ENCODE measurements at regions of chr5 and their contacts with region 1.

Region 1: DNA sequence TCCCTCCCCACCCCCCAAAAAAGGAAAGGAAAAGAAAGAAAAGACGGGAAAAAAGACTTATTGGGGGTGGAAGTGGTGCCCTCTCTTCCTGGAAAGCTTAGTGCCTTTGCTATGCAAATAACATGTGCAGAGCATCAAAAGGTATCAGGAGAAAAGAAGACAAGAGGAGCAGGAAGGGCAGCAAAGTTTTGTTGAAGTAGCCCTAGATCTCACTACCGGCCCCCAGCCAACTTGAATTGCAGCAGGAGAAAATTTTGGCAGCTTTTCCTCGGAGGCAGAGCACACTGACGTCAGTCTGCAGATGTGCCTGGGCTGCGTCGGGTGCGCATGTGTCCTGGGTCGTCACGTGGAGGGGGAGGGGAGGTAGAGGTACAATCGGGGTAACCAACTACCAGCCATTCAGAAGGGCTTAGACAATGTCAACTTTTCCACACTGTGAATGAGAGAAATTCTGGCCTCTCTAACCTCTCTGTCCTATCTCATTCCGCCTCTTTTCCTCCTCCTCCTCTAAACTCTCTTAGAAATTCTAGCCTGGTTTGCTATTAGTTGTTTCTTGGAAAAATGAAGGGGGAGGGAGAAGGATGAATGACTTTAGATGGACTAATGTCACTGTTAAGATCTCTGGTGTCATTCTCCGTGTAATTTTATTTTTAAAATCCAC is at the start of gene ADAMTS6:
- DNase-seq: peak; percentile 89
- ATAC-seq: peak; percentile 91
- H3K4me3 Mint-ChIP-seq: no peak within 1 kb of the TSS
- H3K27ac Mint-ChIP-seq: peak within 1 kb of the TSS; percentile 90
- H3K4me1 Mint-ChIP-seq: peaks cover 10% of the 10 kb centered on the region
- H3K27me3 Mint-ChIP-seq: no peaks in the 10 kb centered on the region
- total RNA-seq, gene ADAMTS6: 2.8 to 4.0 TPM

Region 2: DNA sequence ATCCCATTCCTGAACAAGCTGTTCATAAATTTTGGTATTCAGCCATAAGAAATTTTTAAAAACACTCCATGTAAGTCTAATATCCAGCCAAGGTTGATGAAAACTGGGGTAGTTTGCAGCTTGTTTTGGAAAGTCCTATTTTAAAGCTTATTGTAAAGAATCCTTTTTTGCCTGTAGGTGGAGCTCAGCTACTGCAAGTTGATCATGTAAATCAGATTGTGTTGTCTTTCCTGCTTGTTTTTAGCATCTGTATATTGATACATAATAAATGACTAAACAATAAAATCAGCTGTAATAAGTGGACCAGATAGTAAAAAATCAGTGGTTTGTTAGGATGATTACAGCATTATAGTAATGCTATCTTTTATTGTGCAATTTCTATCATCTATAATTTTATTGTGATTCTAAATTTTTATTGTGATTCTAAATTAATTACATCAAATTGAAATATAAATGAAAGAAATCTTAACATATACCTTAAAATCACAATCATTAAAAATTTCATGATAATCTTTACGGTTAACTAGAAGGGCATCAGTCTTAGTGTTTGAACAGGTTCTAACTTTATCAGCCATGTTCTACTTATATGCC is 670.6 kb before region 1 on chr5:
- CTCF ChIA-PET with region 1: interaction called, 37 read pairs
- DNase-seq: no peak
- ATAC-seq: no peak
- H3K4me3 Mint-ChIP-seq: no peak overlapping the region
- H3K27ac Mint-ChIP-seq: no peak overlapping the region
- H3K4me1 Mint-ChIP-seq: peaks cover 23% of the 10 kb centered on the region
- H3K27me3 Mint-ChIP-seq: no peaks in the 10 kb centered on the region

Region 3: DNA sequence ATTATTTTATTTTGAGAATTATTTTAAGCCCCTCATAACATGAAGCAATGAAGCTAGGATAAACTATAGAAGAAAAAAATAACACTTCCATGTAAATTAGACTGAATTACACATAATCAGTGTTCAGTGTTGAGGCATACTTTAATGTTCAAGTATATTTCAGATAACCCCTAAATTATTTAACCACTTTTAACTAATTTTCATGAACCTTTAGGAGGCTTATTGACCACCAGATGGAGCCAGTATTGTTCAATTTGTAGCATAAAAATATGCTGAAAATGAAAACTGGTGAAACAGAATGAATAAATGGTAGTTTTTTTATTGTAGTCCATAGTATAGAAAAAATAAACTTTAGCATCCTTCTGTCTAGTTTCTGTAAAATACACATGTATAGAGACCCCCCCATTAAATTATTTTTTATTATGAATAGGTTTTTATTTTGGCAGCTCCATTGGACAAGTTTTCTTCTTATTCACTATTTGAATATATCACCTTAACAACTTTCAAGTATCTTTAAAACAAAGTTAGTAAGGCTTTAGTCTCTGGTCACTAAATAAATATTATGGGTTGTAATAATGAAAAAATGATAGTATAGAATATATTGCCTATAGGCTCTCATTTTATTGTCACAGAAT is 522.9 kb before region 1 on chr5:
- CTCF ChIA-PET with region 1: interaction called, 12 read pairs
- DNase-seq: no peak
- ATAC-seq: no peak
- H3K4me3 Mint-ChIP-seq: no peak overlapping the region
- H3K27ac Mint-ChIP-seq: no peak overlapping the region
- H3K4me1 Mint-ChIP-seq: no peaks in the 10 kb centered on the region
- H3K27me3 Mint-ChIP-seq: no peaks in the 10 kb centered on the region

Region 4: DNA sequence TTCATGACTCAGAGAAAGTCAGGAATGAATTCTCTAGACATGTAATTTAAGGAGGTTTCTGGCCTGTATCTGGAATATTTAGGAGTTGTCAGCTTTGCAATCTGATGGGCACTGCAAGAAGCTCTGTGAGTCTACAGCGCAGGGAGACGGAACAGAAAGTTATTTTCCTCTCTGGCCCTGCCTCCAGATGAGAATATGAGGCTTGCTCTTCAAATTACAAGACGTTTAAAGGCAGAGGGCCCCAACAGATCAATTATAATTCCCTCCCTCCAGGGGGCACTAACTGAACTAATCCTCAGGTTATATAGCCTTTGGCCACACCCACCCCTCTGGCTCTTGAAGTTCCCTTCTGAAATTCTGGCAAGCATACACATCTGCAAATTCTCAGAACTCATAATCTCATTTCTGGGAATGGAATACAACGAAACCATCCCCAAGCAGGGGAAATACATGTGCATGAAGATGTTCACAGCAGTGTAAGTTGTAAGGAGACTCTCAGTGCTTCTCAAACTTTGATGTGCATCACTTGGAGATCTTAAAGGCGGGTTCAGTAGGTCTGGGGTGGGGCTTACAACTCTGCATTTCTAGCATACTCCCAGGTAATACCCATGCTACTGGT is 405.4 kb before region 1 on chr5:
- CTCF ChIA-PET with region 1: interaction called, 11 read pairs
- DNase-seq: peak; percentile 83
- ATAC-seq: peak; percentile 97
- H3K4me3 Mint-ChIP-seq: no peak overlapping the region
- H3K27ac Mint-ChIP-seq: peak overlapping the region; percentile 29
- H3K4me1 Mint-ChIP-seq: peaks cover 11% of the 10 kb centered on the region
- H3K27me3 Mint-ChIP-seq: peaks cover 11% of the 10 kb centered on the region

Region 5: DNA sequence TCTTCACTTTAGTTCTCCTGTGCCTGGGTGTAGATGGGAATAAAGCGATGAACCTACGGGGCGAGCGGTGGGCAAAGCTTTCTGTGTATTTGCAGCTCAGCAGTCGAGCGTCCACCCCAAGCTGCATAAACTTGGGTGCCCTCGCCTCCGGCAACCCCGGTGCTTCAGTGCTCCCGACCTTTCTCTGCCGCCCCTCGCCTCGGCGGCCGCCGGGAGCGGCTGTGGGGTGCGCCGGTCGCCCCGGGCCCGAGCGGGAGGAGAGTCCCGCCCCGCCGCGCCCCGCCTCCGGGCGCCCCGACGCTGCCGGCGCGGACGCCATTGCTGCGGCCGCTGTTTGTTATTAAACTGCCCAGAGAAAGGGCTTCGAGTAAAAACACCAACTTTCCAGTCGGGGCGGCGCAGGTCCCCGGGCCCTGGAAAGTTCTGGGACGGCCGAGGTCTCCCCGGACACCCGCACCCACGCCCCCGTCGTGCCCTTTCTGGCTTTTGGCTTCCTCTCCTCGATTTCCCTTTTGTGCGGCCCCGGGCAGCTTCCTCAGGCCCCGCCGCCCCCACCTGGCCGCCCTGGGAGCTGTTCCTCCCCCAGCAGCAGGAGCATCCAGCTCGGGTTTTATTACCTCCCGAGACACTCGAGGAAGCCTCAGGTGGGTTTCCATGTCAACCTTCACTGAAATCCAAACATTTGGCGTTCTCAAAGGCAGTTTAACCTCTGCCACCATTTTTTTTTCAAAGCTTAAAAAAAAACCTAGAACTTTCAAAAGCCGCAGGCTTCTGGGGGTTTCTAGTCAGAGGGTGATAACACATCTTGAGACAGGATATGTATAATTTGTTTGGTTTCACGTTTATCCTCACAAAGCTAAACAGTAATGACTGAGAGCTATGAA is 378.7 kb before region 1 on chr5:
- CTCF ChIA-PET with region 1: interaction called, 34 read pairs
- DNase-seq: peak; percentile 59
- ATAC-seq: peak; percentile 83
- H3K4me3 Mint-ChIP-seq: peak overlapping the region; percentile 66
- H3K27ac Mint-ChIP-seq: peak overlapping the region; percentile 33
- H3K4me1 Mint-ChIP-seq: peaks cover 34% of the 10 kb centered on the region
- H3K27me3 Mint-ChIP-seq: peaks cover 19% of the 10 kb centered on the region

Region 6: DNA sequence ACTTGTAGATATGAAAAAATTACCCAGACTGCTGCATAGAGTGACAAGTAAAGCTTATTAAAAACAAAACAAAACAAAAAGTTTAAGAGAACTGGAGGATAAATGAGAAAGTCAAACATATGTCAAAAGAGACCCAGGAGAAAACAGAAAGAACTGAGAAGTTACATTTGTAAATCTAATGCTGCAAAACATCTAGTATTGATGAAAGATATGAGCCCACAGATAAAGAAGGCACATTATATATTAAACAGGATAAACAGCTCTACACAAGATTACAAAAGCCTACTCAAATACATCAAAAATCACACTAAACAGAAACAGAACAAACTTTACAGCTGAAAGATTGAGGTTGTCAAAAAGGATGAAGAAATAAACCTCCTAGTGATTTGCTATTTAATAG is 55.1 kb before region 1 on chr5:
- CTCF ChIA-PET with region 1: no interaction called
- DNase-seq: no peak
- ATAC-seq: no peak
- H3K4me3 Mint-ChIP-seq: no peak overlapping the region
- H3K27ac Mint-ChIP-seq: no peak overlapping the region
- H3K4me1 Mint-ChIP-seq: no peaks in the 10 kb centered on the region
- H3K27me3 Mint-ChIP-seq: no peaks in the 10 kb centered on the region

Region 7: DNA sequence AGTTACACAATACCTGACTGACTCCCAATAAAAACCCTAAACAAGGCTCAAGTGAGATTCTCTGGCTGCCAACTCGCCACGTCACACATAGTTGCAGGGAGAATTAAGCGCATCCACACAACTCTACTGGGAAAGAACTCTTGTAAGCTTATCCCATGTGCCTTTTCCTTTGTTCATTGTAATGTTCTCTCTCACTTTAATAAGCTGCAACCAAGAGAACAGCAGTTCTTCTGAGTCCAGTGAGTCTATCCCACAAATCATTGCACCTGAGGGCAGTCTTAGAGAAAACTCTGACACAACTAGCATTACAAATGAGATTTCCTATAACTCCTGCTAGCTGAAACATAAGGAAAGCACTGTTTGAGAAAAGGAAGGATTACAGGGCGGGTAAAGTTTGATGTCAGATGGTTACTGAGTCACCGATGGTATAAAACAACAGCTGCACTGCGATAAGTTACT is 53.8 kb after region 1 on chr5:
- CTCF ChIA-PET with region 1: no interaction called
- DNase-seq: no peak
- ATAC-seq: no peak
- H3K4me3 Mint-ChIP-seq: no peak overlapping the region
- H3K27ac Mint-ChIP-seq: no peak overlapping the region
- H3K4me1 Mint-ChIP-seq: no peaks in the 10 kb centered on the region
- H3K27me3 Mint-ChIP-seq: no peaks in the 10 kb centered on the region

Region 8: GRCh38 chr5:65721720-65722574 is 240.2 kb after region 1 on chr5 and contains the starts of genes NLN and SGTB:
- CTCF ChIA-PET with region 1: no interaction called
- DNase-seq: peak; percentile 85
- ATAC-seq: peak; percentile 98
- H3K4me3 Mint-ChIP-seq: peak within 1 kb of the TSS; percentile 91
- H3K27ac Mint-ChIP-seq: peak within 1 kb of the TSS; percentile 83
- H3K4me1 Mint-ChIP-seq: peaks cover 32% of the 10 kb centered on the region
- H3K27me3 Mint-ChIP-seq: no peaks in the 10 kb centered on the region
- total RNA-seq, gene NLN: 15.8 to 19.6 TPM
- total RNA-seq, gene SGTB: 12.5 to 14.0 TPM

Measured in activated CD8-positive, alpha-beta memory T cell treated with anti-CD3 and anti-CD28 coated beads, Interleukin-2, amount 10 ng/mL, durations not matched to agents 7 days and 5 days (primary cell).